Heart left ventricle (tissue), 16 donors: ENCODE measurements at regions of chr1 and their contacts with region 1.

Region 1: GRCh38 chr1:16217061-16217785 is 4.8 kb upstream of the ARHGEF19 start:
- DNase-seq: peak; percentile 99 to 100 (median 99)
- ATAC-seq: peak; percentile 97 to 99 (median 98)
- H3K4me3 ChIP-seq: peak overlapping the region; percentile 40 to 77 (median 56)
- H3K27ac ChIP-seq: peak overlapping the region in 10 of 12 donors; percentile 49 to 79 (median 61)
- H3K4me1 ChIP-seq: peaks cover 0 to 25% (median 13%) of the 10 kb centered on the region in 12 donors
- H3K27me3 ChIP-seq: no peaks in the 10 kb centered on the region
- CTCF ChIP-seq: no peak
- POLR2A ChIP-seq: peak in 1 of 2 donors; percentile 38

Region 2: GRCh38 chr1:15966081-15966955 is 250.9 kb before region 1 on chr1:
- intact Hi-C with region 1: no loop called
- DNase-seq: no peak
- ATAC-seq: peak in 3 of 4 donors; percentile 11 to 60 (median 56)
- H3K4me3 ChIP-seq: peak overlapping the region in 2 of 12 donors; percentile 0 to 1
- H3K27ac ChIP-seq: peak overlapping the region in 10 of 12 donors; percentile 6 to 85 (median 48)
- H3K4me1 ChIP-seq: peaks cover 0 to 55% (median 21%) of the 10 kb centered on the region in 12 donors
- H3K27me3 ChIP-seq: no peaks in the 10 kb centered on the region
- CTCF ChIP-seq: no peak
- POLR2A ChIP-seq: no peak

Region 3: DNA sequence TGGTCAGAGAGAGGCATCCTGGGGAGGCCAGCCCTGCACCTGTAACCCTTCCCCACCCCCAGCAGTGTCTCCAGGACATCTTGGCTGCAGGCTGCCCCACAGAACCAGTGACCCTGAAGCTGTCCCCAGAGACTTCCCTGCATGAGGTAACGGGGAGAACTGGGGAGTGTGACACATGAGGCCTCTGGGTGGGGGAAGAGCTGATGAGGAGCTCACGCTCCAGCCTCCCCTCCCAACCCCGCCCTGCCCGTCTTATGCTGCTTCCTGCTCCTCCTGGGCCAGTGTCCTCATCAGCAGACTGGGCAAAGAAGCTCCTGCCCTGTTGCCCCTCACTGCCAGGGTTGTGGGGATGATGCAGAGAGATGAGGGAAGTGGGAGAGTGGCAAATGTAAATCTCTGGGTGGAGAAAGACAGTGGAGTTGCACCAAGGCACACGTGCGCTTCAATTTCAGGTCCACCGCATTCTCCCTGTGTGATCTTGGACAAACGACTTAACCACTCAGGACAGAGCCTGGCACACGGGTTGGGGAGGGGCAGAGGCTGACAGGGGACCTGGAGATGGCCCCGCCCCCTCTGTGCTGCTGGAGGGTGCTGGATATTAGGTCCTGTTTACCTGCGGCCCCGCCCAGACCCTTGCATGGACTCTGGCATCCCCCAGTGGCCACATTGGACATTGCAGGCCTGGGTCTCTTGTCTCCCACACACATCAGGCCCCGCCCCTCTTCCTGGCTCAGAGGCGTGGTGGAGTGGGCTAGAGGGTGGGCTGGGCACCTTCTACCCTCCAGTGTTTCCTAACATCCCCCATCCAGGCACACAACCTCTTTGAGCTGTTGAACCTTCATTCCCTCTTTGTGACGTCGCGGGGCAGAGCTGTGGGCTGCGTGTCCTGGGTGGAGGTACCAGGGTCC is 161.4 kb before region 1 on chr1:
- intact Hi-C with region 1: no loop called
- DNase-seq: peak; percentile 71 to 87 (median 84)
- ATAC-seq: peak; percentile 71 to 89 (median 80)
- H3K4me3 ChIP-seq: no peak overlapping the region
- H3K27ac ChIP-seq: no peak overlapping the region
- H3K4me1 ChIP-seq: peaks cover 0 to 6% (median 0%) of the 10 kb centered on the region in 12 donors
- H3K27me3 ChIP-seq: no peaks in the 10 kb centered on the region
- CTCF ChIP-seq: peak; percentile 78 to 97 (median 88)
- POLR2A ChIP-seq: no peak

Region 4: GRCh38 chr1:16206547-16207317 is 10.5 kb before region 1 on chr1:
- intact Hi-C with region 1: loop called in 1 of 10 experiments (anchors 1 kb)
- DNase-seq: peak; percentile 97 to 99 (median 98)
- ATAC-seq: peak; percentile 93 to 97 (median 96)
- H3K4me3 ChIP-seq: peak overlapping the region; percentile 30 to 67 (median 63)
- H3K27ac ChIP-seq: peak overlapping the region; percentile 64 to 98 (median 93)
- H3K4me1 ChIP-seq: peaks cover 0 to 23% (median 13%) of the 10 kb centered on the region in 12 donors
- H3K27me3 ChIP-seq: no peaks in the 10 kb centered on the region
- CTCF ChIP-seq: no peak
- POLR2A ChIP-seq: peak in 1 of 2 donors; percentile 64

Region 5: GRCh38 chr1:16236511-16237342 is 19.5 kb after region 1 on chr1 and contains the start of gene CPLANE2:
- intact Hi-C with region 1: loop called in 2 of 10 experiments (anchors 2 kb)
- DNase-seq: peak; percentile 95 to 97 (median 96)
- ATAC-seq: peak; percentile 81 to 96 (median 96)
- H3K4me3 ChIP-seq: peak within 1 kb of the TSS; percentile 49 to 81 (median 68)
- H3K27ac ChIP-seq: peak within 1 kb of the TSS; percentile 61 to 94 (median 86)
- H3K4me1 ChIP-seq: peaks cover 0 to 22% (median 16%) of the 10 kb centered on the region in 12 donors
- H3K27me3 ChIP-seq: no peaks in the 10 kb centered on the region
- CTCF ChIP-seq: peak in 3 of 12 donors; percentile 24 to 33 (median 28)
- POLR2A ChIP-seq: peak in 1 of 2 donors; percentile 88
- total RNA-seq, gene CPLANE2: 3.6 to 9.9 (median 5.7) TPM